ENCODE measurements at regions of chr9 and their contacts with region 1.

Region 1: DNA sequence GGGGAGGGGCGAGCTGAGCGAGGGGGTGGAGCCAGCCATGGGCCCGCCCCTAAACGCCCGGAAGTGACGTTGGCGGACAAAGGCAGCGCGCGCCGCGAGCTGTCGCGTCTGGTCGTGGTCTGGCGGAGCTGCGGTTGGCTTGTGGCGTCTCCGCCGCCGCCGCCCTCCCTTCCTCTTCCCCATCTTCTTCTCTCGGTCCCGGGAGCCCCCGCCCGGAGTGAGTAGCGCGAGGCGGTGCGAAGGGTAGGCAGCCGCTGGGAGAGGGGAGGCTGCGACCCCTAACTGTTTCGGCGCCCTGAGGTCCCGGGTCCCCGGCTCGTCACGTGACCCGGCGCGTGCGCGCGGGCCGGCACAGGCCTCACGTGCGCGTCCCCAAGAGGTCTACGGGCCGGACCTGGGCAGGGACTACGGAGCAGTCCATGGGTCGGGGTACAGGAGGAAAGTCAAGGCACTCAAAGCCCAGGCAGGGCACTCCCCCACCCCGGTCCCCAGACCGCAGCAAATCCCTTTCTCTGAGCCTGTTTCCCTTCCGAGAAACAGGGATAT is at the start of gene NTMT1:
- DNase-seq: peak; percentile 85
- H3K4me3 Mint-ChIP-seq: peak within 1 kb of the TSS; percentile 86
- H3K27ac Mint-ChIP-seq: peak within 1 kb of the TSS; percentile 95
- H3K4me1 Mint-ChIP-seq: peaks cover 41% of the 10 kb centered on the region
- H3K27me3 Mint-ChIP-seq: peaks cover 7% of the 10 kb centered on the region
- total RNA-seq, gene NTMT1: 67.1 and 67.3 TPM in 2 replicates

Region 2: GRCh38 chr9:129131300-129132145 is 494.6 kb before region 1 on chr9:
- intact Hi-C with region 1: loop called (anchors 1 kb)
- DNase-seq: peak; percentile 75
- H3K4me3 Mint-ChIP-seq: no peak overlapping the region
- H3K27ac Mint-ChIP-seq: no peak overlapping the region
- H3K4me1 Mint-ChIP-seq: peaks cover 6% of the 10 kb centered on the region
- H3K27me3 Mint-ChIP-seq: no peaks in the 10 kb centered on the region

Region 3: GRCh38 chr9:129602598-129603415 is 23.3 kb before region 1 on chr9:
- intact Hi-C with region 1: no loop called
- DNase-seq: no peak
- H3K4me3 Mint-ChIP-seq: no peak overlapping the region
- H3K27ac Mint-ChIP-seq: peak overlapping the region; percentile 53
- H3K4me1 Mint-ChIP-seq: peaks cover 47% of the 10 kb centered on the region
- H3K27me3 Mint-ChIP-seq: no peaks in the 10 kb centered on the region

Region 4: DNA sequence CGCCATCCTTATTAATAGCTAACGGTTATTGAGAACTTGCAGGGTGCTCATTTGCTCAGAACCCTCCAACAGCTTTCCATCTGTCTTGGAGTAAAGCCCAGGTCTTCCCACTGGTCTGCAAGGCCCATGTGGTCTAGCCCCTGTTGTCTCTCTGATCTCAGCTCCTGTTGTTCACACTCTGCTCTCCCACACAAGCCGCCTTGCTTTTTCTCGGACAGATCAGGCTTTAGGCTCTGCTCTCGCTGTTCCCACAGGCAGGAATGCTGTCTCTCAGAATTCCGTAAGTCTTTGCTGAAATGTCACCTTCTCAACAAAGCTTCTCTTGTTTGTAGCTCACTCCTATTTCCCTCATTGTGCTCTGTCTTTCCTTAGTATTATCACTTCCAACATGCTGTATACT is 461.9 kb after region 1 on chr9:
- intact Hi-C with region 1: no loop called
- DNase-seq: no peak
- H3K4me3 Mint-ChIP-seq: no peak overlapping the region
- H3K27ac Mint-ChIP-seq: no peak overlapping the region
- H3K4me1 Mint-ChIP-seq: no peaks in the 10 kb centered on the region
- H3K27me3 Mint-ChIP-seq: no peaks in the 10 kb centered on the region

Measured in activated T-helper 1 cell treated with anti-CD3 and anti-CD28 coated beads, Interleukin-12 subunit alpha, Interleukin-12 subunit beta, Interleukin-2, Interleukin-4 antibody, amounts not matched to agents 30 ng/mL and 10 ng/mL and 1 ng/mL, durations not matched to agents 14 hours and 24 hours and 36 hours (primary cell).